GM18951 (cell line): ENCODE measurements at regions of chr3 and their contacts with region 1.

Region 1: GRCh38 chr3:167882067-167882667 is 146.6 kb downstream of the SERPINI1 start:
- POLR2A ChIP-seq: no peak

Region 2: DNA sequence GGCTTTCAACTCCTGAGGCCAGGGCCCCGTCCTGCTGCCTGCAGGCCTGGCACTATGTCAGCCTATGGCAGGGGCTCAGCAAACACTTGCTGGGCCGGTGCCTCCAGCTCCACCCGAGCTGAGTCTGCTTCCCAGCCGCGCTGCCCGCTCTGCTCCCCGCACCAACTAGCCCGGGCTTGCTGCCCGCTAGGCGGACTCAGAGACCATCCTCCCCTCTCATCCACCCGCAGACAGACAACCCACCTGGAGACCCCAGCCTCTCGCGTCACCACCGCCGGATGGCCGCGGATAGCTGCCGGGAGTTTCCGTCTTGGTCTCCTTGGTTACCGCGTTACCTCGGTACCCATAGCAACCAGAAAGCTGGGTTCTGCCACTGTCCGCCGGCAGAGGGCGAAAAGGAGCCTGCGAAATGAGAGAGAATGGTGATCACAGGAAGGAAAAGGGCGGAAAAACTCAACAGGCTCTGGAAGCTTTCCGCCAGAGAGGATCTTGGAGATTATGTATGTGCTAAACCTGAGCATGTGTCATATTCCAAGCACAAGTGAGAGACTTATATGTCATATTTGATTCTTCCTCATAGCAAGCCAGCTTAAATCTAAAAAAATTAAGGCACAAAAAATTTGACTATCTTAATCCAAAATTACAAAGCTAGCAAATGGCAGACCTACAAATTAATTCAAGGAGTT is 502.0 kb before region 1 on chr3 and contains the start of gene ZBBX:
- in situ Hi-C with region 1: loop called (anchors 25 kb)
- POLR2A ChIP-seq: no peak

Region 3: DNA sequence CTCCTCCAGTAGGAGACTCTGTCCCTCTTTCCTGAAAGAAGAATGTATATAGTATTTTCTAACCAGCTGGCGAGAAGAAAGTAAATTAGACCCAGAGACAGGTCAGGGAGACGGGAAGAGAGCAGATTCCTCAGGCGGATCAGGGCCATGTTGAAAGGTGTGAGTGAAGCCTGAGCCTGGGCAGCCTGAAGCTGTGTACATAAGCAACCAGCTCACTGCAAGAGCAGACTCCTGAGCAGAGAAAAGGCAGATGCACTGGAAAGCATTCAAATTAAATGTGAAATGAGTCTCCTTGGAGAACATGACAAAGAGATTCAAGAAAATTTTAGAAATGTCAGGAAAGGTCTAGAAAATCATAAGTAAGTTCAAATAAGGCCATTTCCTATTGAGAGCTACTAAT is 47.8 kb after region 1 on chr3:
- in situ Hi-C with region 1: no loop called
- POLR2A ChIP-seq: no peak